Panc1 (cell line): ENCODE measurements at regions of chr11 and their contacts with region 1.

Region 1: GRCh38 chr11:62421996-62422395 is 3.2 kb downstream of the SCGB1A1 start:
- DNase-seq: no peak
- ATAC-seq: no peak
- H3K4me3 ChIP-seq: no peak overlapping the region
- H3K27ac ChIP-seq: peak overlapping the region; percentile 98
- H3K4me1 ChIP-seq: peaks cover 35% of the 10 kb centered on the region
- H3K27me3 ChIP-seq: no peaks in the 10 kb centered on the region
- CTCF ChIP-seq: no peak

Region 2: GRCh38 chr11:62394825-62395538 is 27.0 kb before region 1 on chr11:
- CTCF ChIA-PET with region 1: interaction called, 25 read pairs
- POLR2A ChIA-PET with region 1: no interaction called
- in situ Hi-C with region 1: no loop called
- intact Hi-C with region 1: no loop called
- DNase-seq: no peak
- ATAC-seq: peak; percentile 94
- H3K4me3 ChIP-seq: no peak overlapping the region; a peak in 1 of 4 replicates
- H3K27ac ChIP-seq: peak overlapping the region; percentile 77
- H3K4me1 ChIP-seq: peaks cover 41% of the 10 kb centered on the region
- H3K27me3 ChIP-seq: no peaks in the 10 kb centered on the region
- CTCF ChIP-seq: peak; percentile 75; the same call in 1 of the 2 replicates